A673 (cell line): ENCODE measurements at regions of chr19 and their contacts with region 1.

Region 1: GRCh38 chr19:57903618-57904184 is 12.7 kb downstream of the ZNF417 start:
- DNase-seq: no peak
- H3K4me3 ChIP-seq: no peak overlapping the region
- H3K27ac ChIP-seq: no peak overlapping the region
- H3K4me1 ChIP-seq: no peaks in the 10 kb centered on the region
- H3K27me3 ChIP-seq: no peaks in the 10 kb centered on the region
- CTCF ChIP-seq: no peak

Region 2: GRCh38 chr19:57410877-57411671 is 492.6 kb before region 1 on chr19 and contains the start of gene ZNF17:
- CTCF ChIA-PET with region 1: no interaction called
- POLR2A ChIA-PET with region 1: no interaction called
- intact Hi-C with region 1: loop called (anchors 2 kb)
- DNase-seq: peak; percentile 97
- H3K4me3 ChIP-seq: peak within 1 kb of the TSS; percentile 91
- H3K27ac ChIP-seq: peak within 1 kb of the TSS; percentile 63
- H3K4me1 ChIP-seq: no peaks in the 10 kb centered on the region
- H3K27me3 ChIP-seq: no peaks in the 10 kb centered on the region
- CTCF ChIP-seq: no peak
- total RNA-seq, gene ZNF17: 13.1 and 19.2 TPM in 2 replicates

Region 3: GRCh38 chr19:57841122-57841763 is 62.5 kb before region 1 on chr19:
- CTCF ChIA-PET with region 1: no interaction called
- POLR2A ChIA-PET with region 1: no interaction called
- intact Hi-C with region 1: no loop called
- DNase-seq: no peak
- H3K4me3 ChIP-seq: no peak overlapping the region
- H3K27ac ChIP-seq: no peak overlapping the region
- H3K4me1 ChIP-seq: no peaks in the 10 kb centered on the region
- H3K27me3 ChIP-seq: no peaks in the 10 kb centered on the region
- CTCF ChIP-seq: no peak